ENCODE measurements at regions of chr4 and their contacts with region 1.

Region 1: DNA sequence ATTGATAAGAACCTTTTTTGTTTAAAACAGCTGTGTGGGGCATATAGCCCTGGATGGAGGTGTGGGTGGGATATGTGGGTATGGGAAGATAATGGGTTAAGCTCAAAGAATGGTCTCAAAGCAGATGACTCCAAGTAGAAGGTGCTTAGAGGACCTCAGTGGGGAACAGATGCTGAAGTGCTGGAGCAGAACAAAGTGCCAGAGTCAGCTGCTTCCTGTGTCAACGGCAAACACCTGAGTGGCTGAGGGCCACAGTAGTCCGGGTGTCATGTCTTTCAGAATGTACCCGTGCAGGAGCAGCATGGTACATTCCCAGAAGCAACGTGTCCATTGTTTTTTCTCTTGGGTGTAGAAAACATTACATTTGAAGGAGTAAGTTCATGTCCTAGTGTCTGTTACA is 210.6 kb downstream of the CCNG2 start:
- DNase-seq: no peak
- H3K4me3 ChIP-seq: no peak overlapping the region
- H3K27ac ChIP-seq: no peak overlapping the region
- H3K4me1 ChIP-seq: no peaks in the 10 kb centered on the region
- H3K27me3 ChIP-seq: no peaks in the 10 kb centered on the region

Region 2: DNA sequence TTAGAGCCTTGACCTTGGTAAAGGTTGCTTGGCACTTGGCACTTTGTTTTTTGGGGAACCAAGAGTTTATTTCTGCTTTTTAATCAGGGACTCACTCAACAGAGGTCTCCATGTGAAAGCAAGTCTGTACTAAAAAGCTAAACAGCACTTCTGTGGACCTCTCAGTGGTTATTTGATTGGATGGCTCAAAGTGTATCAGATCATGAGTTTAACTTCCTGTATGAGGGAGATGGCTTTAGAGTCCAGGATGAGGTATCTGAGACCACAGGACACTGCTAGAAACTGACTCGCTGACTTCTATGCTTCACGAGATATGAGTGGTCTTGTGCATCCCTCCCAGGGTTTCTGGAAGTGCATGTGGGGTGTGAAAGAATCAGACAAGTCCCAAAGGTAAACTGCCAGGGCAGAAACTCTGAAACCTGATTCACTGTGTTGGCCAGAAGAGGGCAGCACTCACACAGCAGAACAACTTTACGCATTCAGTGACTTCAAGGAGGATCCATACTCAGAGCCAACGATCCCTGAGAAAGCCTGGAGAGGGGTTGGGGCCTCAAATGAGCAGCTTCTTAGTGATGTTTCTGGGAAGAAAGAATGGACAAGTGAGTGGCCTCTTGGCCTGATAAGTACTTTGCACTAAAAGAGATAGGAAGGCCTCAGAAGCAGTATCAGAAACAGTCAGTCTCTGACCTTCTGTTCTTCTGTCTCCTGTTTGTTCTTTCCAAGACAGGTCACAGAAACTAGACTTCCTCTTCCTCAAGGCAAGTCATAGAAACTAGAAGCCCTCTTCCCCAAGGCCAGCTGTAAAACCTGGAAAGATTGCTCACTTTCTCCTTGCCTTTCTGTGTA is 17.7 kb after region 1 on chr4:
- CTCF ChIA-PET with region 1: interaction called, 29 read pairs
- POLR2A ChIA-PET with region 1: no interaction called
- DNase-seq: peak; percentile 63 to 78 (median 71)
- H3K4me3 ChIP-seq: no peak overlapping the region
- H3K27ac ChIP-seq: no peak overlapping the region
- H3K4me1 ChIP-seq: no peaks in the 10 kb centered on the region
- H3K27me3 ChIP-seq: peaks cover 0 to 2% (median 0%) of the 10 kb centered on the region in 5 experiments

Region 3: GRCh38 chr4:77481856-77482255 is 114.2 kb after region 1 on chr4:
- CTCF ChIA-PET with region 1: no interaction called
- POLR2A ChIA-PET with region 1: no interaction called
- DNase-seq: no peak
- H3K4me3 ChIP-seq: no peak overlapping the region
- H3K27ac ChIP-seq: no peak overlapping the region
- H3K4me1 ChIP-seq: no peaks in the 10 kb centered on the region
- H3K27me3 ChIP-seq: no peaks in the 10 kb centered on the region

Region 4: GRCh38 chr4:77765720-77766119 is 398.1 kb after region 1 on chr4:
- CTCF ChIA-PET with region 1: no interaction called
- POLR2A ChIA-PET with region 1: no interaction called
- DNase-seq: no peak
- H3K4me3 ChIP-seq: no peak overlapping the region
- H3K27ac ChIP-seq: no peak overlapping the region
- H3K4me1 ChIP-seq: no peaks in the 10 kb centered on the region
- H3K27me3 ChIP-seq: no peaks in the 10 kb centered on the region